ENCODE measurements at regions of chr9 and their contacts with region 1.

Region 1: GRCh38 chr9:385818-386398 is 171.2 kb downstream of the DOCK8 start:
- DNase-seq: peak; percentile 49
- H3K4me3 Mint-ChIP-seq: no peak overlapping the region
- H3K27ac Mint-ChIP-seq: no peak overlapping the region
- H3K4me1 Mint-ChIP-seq: no peaks in the 10 kb centered on the region
- H3K27me3 Mint-ChIP-seq: peaks cover 8% of the 10 kb centered on the region
- CTCF ChIP-seq: peak; percentile 64

Region 2: DNA sequence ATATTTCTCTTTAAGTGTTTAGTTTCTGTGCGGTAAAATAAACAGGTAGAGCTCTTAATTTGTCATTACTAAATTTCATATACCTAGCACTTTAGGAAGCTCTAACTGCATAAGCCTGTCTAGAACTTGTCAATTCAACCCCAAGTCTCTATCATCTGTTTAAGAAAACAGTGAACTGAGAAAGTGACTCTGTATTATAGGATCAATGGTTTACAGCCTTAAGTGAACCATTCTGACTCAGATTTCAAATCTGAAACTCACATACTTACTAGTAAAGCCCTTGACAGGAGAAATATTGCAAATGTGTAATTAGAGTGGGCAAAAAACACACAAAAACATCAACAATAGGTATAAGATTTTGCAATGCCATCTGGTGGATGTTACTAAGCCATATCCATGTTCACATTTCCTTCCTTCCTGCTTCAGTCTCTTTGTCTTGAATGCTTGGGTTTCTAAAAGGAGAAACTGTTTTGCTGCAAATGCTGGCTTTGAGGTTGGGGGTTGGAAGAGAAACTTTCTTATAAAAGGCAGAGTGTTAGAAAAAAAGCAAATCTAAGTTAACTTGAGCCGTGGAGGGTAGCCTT is 69.4 kb before region 1 on chr9:
- CTCF ChIA-PET with region 1: no interaction called
- intact Hi-C with region 1: no loop called
- DNase-seq: no peak
- H3K4me3 Mint-ChIP-seq: no peak overlapping the region
- H3K27ac Mint-ChIP-seq: no peak overlapping the region
- H3K4me1 Mint-ChIP-seq: no peaks in the 10 kb centered on the region
- H3K27me3 Mint-ChIP-seq: no peaks in the 10 kb centered on the region
- CTCF ChIP-seq: no peak

Region 3: GRCh38 chr9:459491-460444 is 73.9 kb after region 1 on chr9:
- CTCF ChIA-PET with region 1: no interaction called
- intact Hi-C with region 1: no loop called
- DNase-seq: no peak
- H3K4me3 Mint-ChIP-seq: no peak overlapping the region
- H3K27ac Mint-ChIP-seq: no peak overlapping the region
- H3K4me1 Mint-ChIP-seq: peaks cover 11% of the 10 kb centered on the region
- H3K27me3 Mint-ChIP-seq: no peaks in the 10 kb centered on the region
- CTCF ChIP-seq: no peak

Region 4: DNA sequence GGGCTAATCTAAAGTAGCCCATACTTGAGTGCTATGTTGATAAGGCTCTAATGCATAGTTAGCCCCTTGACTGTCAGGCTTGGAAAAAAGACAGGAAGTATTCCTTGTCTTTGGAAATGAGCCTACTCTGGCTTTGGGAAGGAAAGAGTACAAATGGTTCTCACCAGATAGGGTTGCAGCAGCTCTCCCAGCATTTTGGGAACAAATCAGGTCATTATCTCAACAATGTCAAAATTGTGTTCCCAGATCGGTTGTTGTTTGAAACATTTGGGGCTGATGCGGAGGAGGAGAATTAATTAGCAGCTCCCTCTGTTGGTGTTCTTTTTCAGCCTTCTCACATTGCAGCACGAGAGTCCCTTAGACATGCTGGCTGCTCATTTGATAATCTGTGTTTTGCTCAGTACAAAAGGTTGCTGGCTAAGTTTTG is 160.9 kb after region 1 on chr9:
- CTCF ChIA-PET with region 1: no interaction called
- intact Hi-C with region 1: loop called (anchors 5 kb)
- DNase-seq: no peak
- H3K4me3 Mint-ChIP-seq: no peak overlapping the region
- H3K27ac Mint-ChIP-seq: no peak overlapping the region
- H3K4me1 Mint-ChIP-seq: no peaks in the 10 kb centered on the region
- H3K27me3 Mint-ChIP-seq: no peaks in the 10 kb centered on the region
- CTCF ChIP-seq: no peak

Region 5: DNA sequence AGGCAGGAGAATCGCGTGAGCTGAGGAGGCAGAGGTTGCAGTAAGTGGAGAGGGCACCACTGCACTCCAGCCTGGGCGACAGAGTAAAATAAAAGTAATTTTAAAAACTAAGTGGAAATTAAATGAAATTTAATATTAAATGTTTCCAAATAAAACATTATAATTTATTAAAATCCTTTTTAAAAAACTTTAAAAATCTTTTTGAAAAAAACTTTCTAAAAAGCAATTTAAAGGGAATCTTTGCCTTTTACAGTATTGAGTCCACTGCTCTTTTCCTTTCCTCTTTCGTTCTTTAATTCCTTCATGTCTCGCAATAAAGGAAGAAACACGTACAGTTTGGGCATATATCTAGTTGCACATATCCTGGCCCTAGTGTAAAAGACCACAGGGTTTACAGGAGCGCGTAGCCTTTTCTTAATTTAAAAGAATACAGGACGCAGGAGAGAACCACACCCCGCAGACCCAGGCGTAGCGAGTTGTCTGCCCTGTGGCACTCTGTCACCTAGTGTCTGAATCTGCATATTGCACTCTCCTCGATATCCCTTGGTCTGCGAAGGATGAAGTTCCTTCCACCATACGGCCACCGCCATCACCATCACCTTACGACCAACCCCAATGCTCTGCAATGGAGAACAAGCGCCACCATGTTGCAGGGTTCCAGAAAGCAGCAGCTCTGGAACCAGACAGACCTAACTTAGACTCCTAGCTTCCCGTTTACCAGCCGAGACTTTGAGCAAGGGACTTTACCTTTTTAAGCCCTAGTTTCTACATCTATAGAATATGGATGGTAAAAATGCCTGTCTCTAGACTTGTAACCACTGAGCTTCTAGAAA is 378.0 kb after region 1 on chr9:
- CTCF ChIA-PET with region 1: no interaction called
- intact Hi-C with region 1: loop called (anchors 2 kb)
- DNase-seq: peak; percentile 75
- H3K4me3 Mint-ChIP-seq: no peak overlapping the region
- H3K27ac Mint-ChIP-seq: no peak overlapping the region
- H3K4me1 Mint-ChIP-seq: peaks cover 7% of the 10 kb centered on the region
- H3K27me3 Mint-ChIP-seq: peaks cover 40% of the 10 kb centered on the region
- CTCF ChIP-seq: peak; percentile 66

Region 6: DNA sequence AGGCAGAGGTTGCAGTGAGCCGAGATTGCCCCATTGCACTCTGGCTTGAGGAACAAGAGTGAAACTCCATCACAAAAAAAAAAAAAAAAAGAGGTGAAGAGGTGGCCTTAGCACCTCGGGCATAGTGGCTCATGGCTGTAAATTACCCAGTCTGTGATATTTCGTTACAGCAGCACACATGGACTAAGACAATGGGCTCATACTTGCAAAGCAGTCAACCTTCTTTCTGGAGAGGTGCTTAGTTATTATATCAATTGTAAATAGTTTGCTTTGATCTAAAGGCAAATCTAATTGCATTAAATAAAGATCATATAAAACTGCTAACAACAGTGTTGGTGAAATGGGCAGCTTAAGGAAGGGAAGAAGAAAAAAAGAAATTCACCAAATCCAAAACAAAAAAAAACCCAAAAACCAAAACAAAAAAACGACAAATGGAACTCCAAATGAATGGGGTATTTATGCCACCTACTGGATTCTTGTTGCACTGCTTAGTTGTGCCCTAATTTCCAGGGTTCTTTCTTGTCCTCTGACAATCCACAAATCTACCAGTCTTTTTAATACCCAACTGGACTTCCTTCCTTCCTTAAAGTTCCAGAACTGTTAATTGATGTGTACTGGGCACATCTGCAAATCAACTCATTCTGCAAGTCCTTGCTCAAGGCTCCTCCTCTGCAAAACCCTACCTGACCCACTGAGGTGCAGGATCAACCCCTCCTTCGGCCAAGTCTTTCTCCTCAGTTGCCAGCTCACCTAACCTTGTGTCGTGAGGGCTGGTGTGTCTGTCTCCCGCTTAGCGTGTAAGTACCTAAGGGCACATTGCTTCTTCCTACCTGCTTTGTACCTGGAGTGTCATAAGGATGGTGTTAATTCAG is 420.6 kb after region 1 on chr9:
- CTCF ChIA-PET with region 1: no interaction called
- intact Hi-C with region 1: loop called (anchors 5 kb)
- DNase-seq: peak; percentile 2
- H3K4me3 Mint-ChIP-seq: no peak overlapping the region
- H3K27ac Mint-ChIP-seq: no peak overlapping the region
- H3K4me1 Mint-ChIP-seq: no peaks in the 10 kb centered on the region
- H3K27me3 Mint-ChIP-seq: peaks cover 12% of the 10 kb centered on the region
- CTCF ChIP-seq: no peak

Measured in Calu3 (cell line).